AG04450 (cell line): ENCODE measurements at regions of chr9 and their contacts with region 1.

Region 1: DNA sequence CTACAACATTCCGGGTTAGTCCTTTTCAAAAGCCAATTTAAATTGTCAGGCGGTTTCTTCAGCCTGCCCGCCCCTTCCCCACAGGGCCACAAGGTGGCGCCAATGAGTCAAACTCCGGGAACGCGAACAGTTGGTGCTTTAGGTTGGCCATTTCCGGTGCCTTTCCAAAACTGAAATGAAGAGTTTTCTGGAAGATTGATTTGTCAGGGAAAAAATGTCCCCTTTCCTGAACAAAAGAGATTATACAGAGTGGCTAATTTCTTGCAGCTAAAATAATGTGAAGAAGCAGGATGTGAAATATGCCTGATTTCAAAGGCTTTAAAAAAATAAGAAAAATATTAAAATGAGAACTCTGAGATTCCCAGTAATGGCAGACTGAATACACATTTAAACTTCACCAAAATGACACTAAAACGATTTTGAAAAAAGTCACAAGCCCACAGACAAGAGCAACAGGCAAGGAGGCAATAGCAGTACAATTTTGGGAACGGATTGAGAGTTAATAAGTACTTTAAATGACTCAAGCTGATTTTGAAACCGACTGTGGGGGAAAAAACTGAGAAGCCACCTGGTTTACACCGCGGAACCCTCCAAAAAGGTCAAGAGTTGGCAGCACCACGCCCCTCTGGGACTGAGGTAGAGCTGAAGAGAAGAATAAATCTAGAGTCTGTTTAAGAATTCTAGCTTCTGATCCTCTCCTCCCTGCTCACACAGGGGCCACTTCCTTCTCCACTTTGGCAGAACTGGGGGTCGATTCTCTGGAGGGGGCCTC is 45.7 kb downstream of the SLC46A2 start:
- DNase-seq: no peak
- H3K4me3 ChIP-seq: no peak overlapping the region
- H3K27ac ChIP-seq: no peak overlapping the region
- H3K27me3 ChIP-seq: no peaks in the 10 kb centered on the region
- CTCF ChIP-seq: peak; percentile 99

Region 2: GRCh38 chr9:111992523-111992922 is 852.4 kb before region 1 on chr9:
- CTCF ChIA-PET with region 1: interaction called, 16 read pairs
- POLR2A ChIA-PET with region 1: no interaction called
- DNase-seq: no peak
- H3K4me3 ChIP-seq: no peak overlapping the region
- H3K27ac ChIP-seq: no peak overlapping the region
- H3K27me3 ChIP-seq: no peaks in the 10 kb centered on the region
- CTCF ChIP-seq: no peak

Region 3: DNA sequence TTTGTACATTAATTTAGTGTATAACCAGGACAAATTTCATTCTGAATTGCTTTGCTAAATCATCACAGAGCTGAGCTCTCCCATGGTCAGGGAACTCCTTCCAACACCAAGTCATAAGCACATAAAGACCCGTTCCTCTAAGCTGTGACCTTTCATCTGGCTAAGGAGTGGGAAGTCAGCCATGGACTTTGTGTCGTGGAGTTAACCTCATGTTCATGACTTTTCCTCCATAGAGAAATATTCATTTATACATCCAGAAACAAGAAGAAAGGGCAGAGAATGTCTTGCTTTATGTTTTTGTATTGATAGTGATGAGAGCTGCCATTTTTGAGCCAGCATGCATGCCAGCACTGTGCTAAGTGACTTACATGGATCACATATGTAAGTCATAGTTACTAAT is 224.6 kb before region 1 on chr9:
- CTCF ChIA-PET with region 1: no interaction called
- POLR2A ChIA-PET with region 1: no interaction called
- DNase-seq: no peak
- H3K4me3 ChIP-seq: no peak overlapping the region
- H3K27ac ChIP-seq: no peak overlapping the region
- H3K27me3 ChIP-seq: no peaks in the 10 kb centered on the region
- CTCF ChIP-seq: no peak